Dendritic cell treated with granulocyte-macrophage colony-stimulating factor and Interleukin-4, amounts not matched to agents 40 ng/mL and 50 ng/mL, for 4 days (primary cell): ENCODE measurements at regions of chr14 and their contacts with region 1.

Region 1: DNA sequence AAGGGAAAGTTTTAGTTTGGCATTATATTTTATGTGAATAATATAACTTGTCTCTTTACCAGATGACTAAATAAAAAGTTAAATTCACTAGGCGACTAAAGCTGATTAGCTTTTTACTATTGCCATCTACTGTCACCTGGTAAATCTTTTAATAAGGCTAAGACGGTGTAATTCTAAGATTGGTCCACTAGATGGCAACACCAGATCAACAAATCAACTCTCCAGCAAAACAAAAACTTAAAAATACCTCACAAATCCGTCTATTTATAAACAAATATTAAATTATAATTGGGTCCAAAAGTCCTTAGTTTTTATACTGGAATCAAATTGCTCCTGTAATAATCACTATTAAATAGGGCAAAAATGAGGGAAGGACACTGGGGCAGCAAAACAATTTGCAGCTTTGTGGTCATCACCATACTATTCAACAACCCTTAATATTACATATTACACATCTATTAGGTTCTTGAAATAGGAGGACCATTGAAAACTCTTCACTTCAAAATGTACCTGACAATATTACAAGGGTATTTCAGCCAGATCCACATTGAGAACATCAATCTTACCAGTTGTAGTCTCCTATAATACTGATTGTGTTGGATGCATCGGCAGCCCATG is 47.9 kb downstream of the GALC start:
- H3K4me3 Mint-ChIP-seq: no peak overlapping the region
- H3K27ac Mint-ChIP-seq: no peak overlapping the region
- H3K4me1 Mint-ChIP-seq: peaks cover 6% of the 10 kb centered on the region
- H3K27me3 Mint-ChIP-seq: no peaks in the 10 kb centered on the region

Region 2: GRCh38 chr14:87691042-87691881 is 253.8 kb before region 1 on chr14:
- intact Hi-C with region 1: no loop called
- H3K4me3 Mint-ChIP-seq: no peak overlapping the region
- H3K27ac Mint-ChIP-seq: no peak overlapping the region
- H3K4me1 Mint-ChIP-seq: no peaks in the 10 kb centered on the region
- H3K27me3 Mint-ChIP-seq: no peaks in the 10 kb centered on the region

Region 3: DNA sequence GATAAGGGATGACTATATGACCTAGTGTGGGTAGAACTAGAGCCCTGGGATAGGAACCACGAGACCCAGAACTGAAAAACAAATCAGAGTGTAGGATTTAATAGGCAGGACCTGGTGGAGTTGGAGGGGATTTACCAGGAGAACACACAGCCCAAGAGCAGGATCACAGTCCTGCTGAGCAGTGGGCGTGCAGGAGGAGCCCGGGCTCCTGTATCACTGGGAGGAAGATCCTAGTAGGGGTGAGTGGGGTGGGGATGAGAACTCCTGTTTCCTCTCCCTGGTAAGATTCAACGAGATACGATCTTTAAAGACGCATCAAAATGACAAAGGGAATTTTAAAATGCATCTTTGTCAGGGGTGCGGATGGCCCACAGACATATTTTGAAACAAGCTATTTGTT is 172.2 kb before region 1 on chr14:
- intact Hi-C with region 1: no loop called
- H3K4me3 Mint-ChIP-seq: no peak overlapping the region
- H3K27ac Mint-ChIP-seq: no peak overlapping the region
- H3K4me1 Mint-ChIP-seq: no peaks in the 10 kb centered on the region
- H3K27me3 Mint-ChIP-seq: peaks cover 1% of the 10 kb centered on the region

Region 4: DNA sequence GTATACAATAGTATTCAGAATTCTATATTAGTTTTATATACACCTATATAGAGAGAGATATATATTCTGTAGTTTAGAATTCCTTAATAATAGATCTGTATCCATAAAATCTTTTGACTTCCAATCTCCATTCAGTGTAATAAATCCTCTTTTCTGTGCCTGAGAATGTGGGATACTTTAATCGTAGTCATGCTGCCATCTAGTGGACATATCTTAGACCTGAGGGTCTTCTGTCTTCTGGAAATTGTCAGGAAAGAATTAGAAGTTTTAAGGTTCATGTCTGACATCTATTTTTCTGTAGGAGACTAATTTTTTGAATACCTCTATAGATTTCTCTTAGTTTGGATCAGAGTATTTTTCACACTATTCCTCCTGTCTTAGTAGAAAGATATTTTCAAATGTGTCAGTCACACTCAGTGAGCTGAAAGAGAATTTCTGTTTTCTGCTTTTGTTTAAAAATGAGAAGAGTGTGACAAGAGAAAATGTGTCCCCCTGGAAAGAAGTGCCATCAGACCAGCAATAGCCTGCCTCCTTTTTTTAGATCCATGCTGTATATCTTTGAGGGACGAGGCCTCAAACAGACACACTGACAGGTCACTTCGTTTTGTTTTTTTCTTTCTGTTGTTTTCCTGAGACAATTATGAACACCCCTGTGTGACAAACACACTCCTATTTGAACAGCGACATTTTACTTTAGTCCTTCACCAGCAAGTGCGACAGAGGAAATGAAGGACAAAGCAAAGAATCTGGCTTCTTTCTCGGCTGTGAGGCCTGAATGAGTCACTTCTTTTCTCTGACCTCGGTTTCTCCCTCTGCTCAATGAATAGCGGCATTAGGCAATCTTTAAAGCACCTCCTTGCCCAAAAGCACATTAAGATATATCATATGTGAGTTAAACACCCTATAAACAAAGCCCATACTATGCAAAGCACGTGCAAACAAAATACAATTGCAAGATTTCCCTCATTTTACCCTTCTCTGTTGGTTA is 48.4 kb before region 1 on chr14:
- intact Hi-C with region 1: no loop called
- H3K4me3 Mint-ChIP-seq: no peak overlapping the region
- H3K27ac Mint-ChIP-seq: no peak overlapping the region
- H3K4me1 Mint-ChIP-seq: no peaks in the 10 kb centered on the region
- H3K27me3 Mint-ChIP-seq: peaks cover 13% of the 10 kb centered on the region

Region 5: DNA sequence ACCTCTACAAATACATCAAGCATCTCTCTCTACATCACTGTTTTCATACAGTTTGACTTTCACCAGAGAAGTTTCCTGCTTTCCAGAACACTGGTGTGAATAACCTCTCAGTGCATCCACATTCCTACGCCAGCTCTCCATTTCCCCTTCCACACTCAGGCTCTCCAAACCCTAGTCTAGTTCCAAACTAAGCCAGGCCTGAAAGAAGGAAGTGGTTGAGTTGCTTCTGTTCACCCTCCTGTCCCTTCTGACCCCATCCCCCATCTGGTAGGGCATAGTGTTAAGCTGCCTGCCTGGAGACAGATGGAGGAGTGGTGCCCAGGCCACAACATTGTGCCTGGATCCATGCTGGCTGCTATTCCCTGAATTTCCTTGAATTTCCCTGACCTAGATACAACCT is 192.2 kb after region 1 on chr14:
- intact Hi-C with region 1: no loop called
- H3K4me3 Mint-ChIP-seq: no peak overlapping the region
- H3K27ac Mint-ChIP-seq: peak overlapping the region; percentile 17
- H3K4me1 Mint-ChIP-seq: peaks cover 16% of the 10 kb centered on the region
- H3K27me3 Mint-ChIP-seq: peaks cover 30% of the 10 kb centered on the region

Region 6: DNA sequence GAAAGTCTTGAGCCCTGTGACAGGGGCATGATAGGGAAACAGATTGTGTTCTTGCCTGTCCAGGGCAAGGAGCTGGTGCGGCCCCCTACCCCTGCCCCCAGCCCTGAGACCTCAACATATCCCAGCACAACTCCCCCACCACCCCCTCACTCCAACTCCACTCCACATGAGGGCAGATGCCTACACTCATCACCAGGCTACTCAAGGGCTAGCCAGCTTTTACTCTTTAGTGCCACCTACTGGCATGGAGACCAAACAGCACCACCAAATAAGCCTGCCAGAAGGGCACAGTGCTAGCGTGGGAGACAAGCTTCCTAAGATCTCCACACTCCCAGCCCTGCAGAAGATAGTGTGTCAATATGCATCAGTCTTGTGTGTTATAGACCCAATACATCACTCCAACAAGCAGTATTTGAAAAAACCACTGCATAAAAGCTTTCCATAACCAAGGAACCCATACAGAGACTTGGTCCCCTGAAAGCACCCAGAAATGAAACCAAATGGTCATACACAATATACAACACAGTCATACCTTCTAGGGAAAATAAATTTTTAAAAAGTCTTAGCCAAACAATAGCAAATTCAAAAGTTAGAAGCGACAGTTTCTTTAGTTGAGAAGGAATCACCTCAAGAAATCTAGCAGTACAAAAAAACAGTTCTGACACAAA is 223.5 kb after region 1 on chr14:
- intact Hi-C with region 1: loop called (anchors 1 kb)
- H3K4me3 Mint-ChIP-seq: no peak overlapping the region
- H3K27ac Mint-ChIP-seq: no peak overlapping the region
- H3K4me1 Mint-ChIP-seq: peaks cover 20% of the 10 kb centered on the region
- H3K27me3 Mint-ChIP-seq: peaks cover 38% of the 10 kb centered on the region

Region 7: DNA sequence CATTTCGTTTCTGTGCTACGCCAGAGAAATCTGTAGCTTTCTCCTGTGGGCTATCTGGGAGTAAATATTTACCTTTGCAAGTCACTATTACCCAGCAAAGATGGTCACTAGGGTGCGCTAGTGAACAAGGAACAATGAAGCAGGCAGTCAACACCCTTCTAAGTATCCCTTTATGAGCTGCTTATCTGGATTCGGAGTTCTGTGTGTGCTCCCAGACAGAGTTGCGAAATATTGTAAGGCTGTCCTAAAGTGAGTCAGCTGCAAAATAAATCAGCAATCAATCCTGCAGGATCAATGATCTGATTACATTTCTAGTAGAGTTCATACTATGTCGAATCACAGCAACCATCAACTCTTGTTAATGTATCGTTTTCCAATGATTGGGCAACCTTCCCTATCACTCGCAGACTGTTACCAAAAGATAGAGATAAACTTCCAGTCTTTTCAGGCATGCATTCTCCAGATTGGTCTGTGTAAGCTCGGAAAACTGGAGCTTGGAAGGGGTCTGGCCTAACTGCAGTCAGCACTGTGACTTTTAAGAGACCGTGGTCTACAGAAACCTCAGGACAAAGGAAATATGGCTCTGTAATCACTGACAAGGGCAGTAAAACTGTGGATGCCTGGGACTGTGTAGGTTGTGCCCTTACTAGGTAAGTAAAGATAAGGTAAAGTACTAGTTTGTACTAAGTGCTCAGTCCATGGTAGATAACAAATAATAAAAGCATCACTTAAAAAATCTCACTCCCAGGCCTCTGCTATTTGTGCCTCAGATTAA is 244.5 kb after region 1 on chr14:
- intact Hi-C with region 1: loop called (anchors 5 kb)
- H3K4me3 Mint-ChIP-seq: no peak overlapping the region
- H3K27ac Mint-ChIP-seq: no peak overlapping the region
- H3K4me1 Mint-ChIP-seq: peaks cover 10% of the 10 kb centered on the region
- H3K27me3 Mint-ChIP-seq: peaks cover 12% of the 10 kb centered on the region

Region 8: GRCh38 chr14:88385345-88386101 is 440.4 kb after region 1 on chr14 and contains the start of gene SPATA7:
- intact Hi-C with region 1: loop called (anchors 10 kb)
- H3K4me3 Mint-ChIP-seq: peak within 1 kb of the TSS; percentile 97
- H3K27ac Mint-ChIP-seq: peak within 1 kb of the TSS; percentile 90
- H3K4me1 Mint-ChIP-seq: peaks cover 13% of the 10 kb centered on the region
- H3K27me3 Mint-ChIP-seq: peaks cover 13% of the 10 kb centered on the region